GM12878 (cell line): ENCODE measurements at regions of chr1 and their contacts with region 1.

Region 1: GRCh38 chr1:174953285-174954072 is 46.3 kb upstream of the CACYBP start:
- DNase-seq: no peak
- ATAC-seq: peak; percentile 80
- H3K4me3 ChIP-seq: peak overlapping the region; percentile 59; the same call in 1 of the 2 replicates
- H3K27ac ChIP-seq: peak overlapping the region; percentile 48
- H3K4me1 ChIP-seq: peaks cover 25% of the 10 kb centered on the region
- H3K27me3 ChIP-seq: no peaks in the 10 kb centered on the region
- CTCF ChIP-seq: no peak
- EP300 ChIP-seq: peak; percentile 53 to 78; a peak in 2 of 4 replicates
- POLR2A ChIP-seq: no peak
- RAD21 ChIP-seq: no peak

Region 2: DNA sequence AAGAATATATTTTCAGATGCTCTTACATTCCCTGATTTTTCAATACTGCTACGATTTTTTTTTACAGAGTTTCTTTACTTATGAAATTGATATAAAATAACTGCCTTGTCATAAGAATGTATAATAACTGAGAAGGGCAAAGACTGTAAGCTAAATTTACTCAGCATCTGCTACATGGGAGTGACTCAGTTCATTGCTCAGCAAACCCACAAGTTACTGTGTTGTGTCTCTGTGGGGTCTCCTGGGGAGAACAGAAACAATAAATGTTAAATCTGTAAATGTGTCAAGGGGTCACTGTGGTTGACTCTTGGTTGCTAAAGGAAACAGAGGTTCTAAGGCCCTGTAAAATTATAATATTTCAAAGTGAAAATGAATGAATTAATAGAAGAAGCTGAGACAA is 164.1 kb before region 1 on chr1:
- CTCF ChIA-PET with region 1: no interaction called
- POLR2A ChIA-PET with region 1: no interaction called
- RAD21 ChIA-PET with region 1: no interaction called
- SMC1A ChIA-PET with region 1: no interaction called
- in situ Hi-C with region 1: no loop called
- intact Hi-C with region 1: no loop called
- DNase-seq: peak; percentile 50
- ATAC-seq: peak; percentile 86
- H3K4me3 ChIP-seq: no peak overlapping the region
- H3K27ac ChIP-seq: no peak overlapping the region
- H3K4me1 ChIP-seq: peaks cover 32% of the 10 kb centered on the region
- H3K27me3 ChIP-seq: no peaks in the 10 kb centered on the region
- CTCF ChIP-seq: no peak
- EP300 ChIP-seq: peak; percentile 37 to 76; a peak in 2 of 4 replicates
- POLR2A ChIP-seq: no peak
- RAD21 ChIP-seq: no peak

Region 3: DNA sequence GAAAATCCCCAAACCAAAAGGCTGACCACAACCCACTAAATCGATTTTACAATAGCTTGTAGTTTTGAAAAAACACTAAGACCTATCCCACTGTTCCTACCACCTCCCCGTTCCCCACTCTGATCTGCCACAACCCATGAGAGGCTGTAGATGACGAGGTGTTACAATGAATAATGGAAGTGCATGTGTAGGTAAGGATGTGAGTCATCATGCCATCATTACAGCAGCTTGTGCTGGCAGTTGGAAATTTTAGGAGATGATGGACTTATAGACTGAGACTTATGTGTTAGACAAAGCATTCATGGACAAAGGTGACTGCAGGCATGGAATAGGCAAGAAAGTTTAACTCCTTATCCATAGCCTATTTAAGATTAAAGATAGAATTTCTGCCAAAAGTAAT is 138.4 kb before region 1 on chr1:
- CTCF ChIA-PET with region 1: interaction called, 4 read pairs
- POLR2A ChIA-PET with region 1: interaction called, 5 read pairs
- RAD21 ChIA-PET with region 1: interaction called, 6 read pairs
- SMC1A ChIA-PET with region 1: interaction called, 11 read pairs
- in situ Hi-C with region 1: no loop called
- intact Hi-C with region 1: no loop called
- DNase-seq: peak; percentile 21
- ATAC-seq: peak; percentile 81
- H3K4me3 ChIP-seq: 0 out of 2 replicates have a peak overlapping the region, but pooled peaks have one; percentile 53
- H3K27ac ChIP-seq: peak overlapping the region; percentile 68
- H3K4me1 ChIP-seq: peaks cover 45% of the 10 kb centered on the region
- H3K27me3 ChIP-seq: no peaks in the 10 kb centered on the region
- CTCF ChIP-seq: no peak
- EP300 ChIP-seq: no peak
- POLR2A ChIP-seq: no peak
- RAD21 ChIP-seq: no peak

Region 4: GRCh38 chr1:174883409-174883808 is 70.1 kb before region 1 on chr1:
- CTCF ChIA-PET with region 1: no interaction called
- POLR2A ChIA-PET with region 1: interaction called, 5 read pairs
- RAD21 ChIA-PET with region 1: interaction called, 6 read pairs
- SMC1A ChIA-PET with region 1: interaction called, 10 read pairs
- in situ Hi-C with region 1: no loop called
- intact Hi-C with region 1: no loop called
- DNase-seq: no peak
- ATAC-seq: peak; percentile 43; the same call in 2 of the 3 replicates
- H3K4me3 ChIP-seq: no peak overlapping the region
- H3K27ac ChIP-seq: no peak overlapping the region
- H3K4me1 ChIP-seq: no peaks in the 10 kb centered on the region
- H3K27me3 ChIP-seq: no peaks in the 10 kb centered on the region
- CTCF ChIP-seq: peak in 2 of 3 experiments; percentile 10 to 46; a peak in 2 of 6 replicates
- EP300 ChIP-seq: no peak
- POLR2A ChIP-seq: no peak
- RAD21 ChIP-seq: peak; percentile 44; the same call in 1 of the 2 replicates

Region 5: GRCh38 chr1:174902531-174903099 is 50.9 kb before region 1 on chr1:
- CTCF ChIA-PET with region 1: no interaction called
- POLR2A ChIA-PET with region 1: no interaction called
- RAD21 ChIA-PET with region 1: no interaction called
- SMC1A ChIA-PET with region 1: no interaction called
- in situ Hi-C with region 1: no loop called
- intact Hi-C with region 1: no loop called
- DNase-seq: no peak
- ATAC-seq: no peak
- H3K4me3 ChIP-seq: no peak overlapping the region
- H3K27ac ChIP-seq: no peak overlapping the region
- H3K4me1 ChIP-seq: no peaks in the 10 kb centered on the region
- H3K27me3 ChIP-seq: no peaks in the 10 kb centered on the region
- CTCF ChIP-seq: no peak
- EP300 ChIP-seq: no peak
- POLR2A ChIP-seq: no peak
- RAD21 ChIP-seq: no peak

Region 6: DNA sequence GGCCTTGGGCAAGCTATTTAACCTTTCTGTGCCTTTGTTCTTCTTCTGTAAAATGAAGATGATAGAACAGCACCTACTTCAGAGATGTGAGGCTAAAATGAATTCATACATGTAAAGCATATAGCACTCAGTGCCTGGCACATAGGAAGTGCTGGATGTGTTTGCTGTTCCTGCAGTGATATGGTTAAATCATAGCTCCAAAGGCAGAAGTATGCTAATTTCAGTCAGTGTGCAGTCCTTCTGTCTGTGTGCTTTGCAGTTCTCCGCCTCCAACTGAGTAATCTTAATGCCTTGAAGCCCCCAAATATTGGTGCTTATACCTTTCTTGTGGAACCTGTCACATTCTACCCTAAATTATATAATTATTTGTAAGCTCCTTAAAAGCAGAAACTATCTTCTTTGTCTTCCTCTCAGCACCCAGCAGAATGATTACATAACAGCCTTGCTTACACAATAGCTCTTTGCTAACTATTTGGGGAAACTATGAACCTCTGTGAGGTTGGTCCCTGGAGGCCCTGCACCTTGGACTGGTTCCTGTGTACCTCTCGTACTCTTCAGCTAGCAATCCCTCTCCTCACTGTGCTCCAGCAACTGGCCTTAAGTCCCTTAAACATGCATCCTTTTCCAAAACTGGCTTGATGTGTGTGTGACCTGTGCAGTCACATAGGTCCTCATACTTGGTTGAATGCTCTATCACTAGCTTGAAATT is 10.8 kb before region 1 on chr1:
- CTCF ChIA-PET with region 1: interaction called, 6 read pairs
- POLR2A ChIA-PET with region 1: interaction called, 10 read pairs
- RAD21 ChIA-PET with region 1: interaction called, 11 read pairs
- SMC1A ChIA-PET with region 1: interaction called, 13 read pairs
- in situ Hi-C with region 1: no loop called
- intact Hi-C with region 1: no loop called
- DNase-seq: no peak
- ATAC-seq: no peak
- H3K4me3 ChIP-seq: no peak overlapping the region
- H3K27ac ChIP-seq: no peak overlapping the region
- H3K4me1 ChIP-seq: no peaks in the 10 kb centered on the region
- H3K27me3 ChIP-seq: no peaks in the 10 kb centered on the region
- CTCF ChIP-seq: no peak
- EP300 ChIP-seq: 0 out of 4 replicates have a peak, but pooled peaks of 1 of the 2 experiments have one; percentile 17
- POLR2A ChIP-seq: no peak
- RAD21 ChIP-seq: no peak

Region 7: DNA sequence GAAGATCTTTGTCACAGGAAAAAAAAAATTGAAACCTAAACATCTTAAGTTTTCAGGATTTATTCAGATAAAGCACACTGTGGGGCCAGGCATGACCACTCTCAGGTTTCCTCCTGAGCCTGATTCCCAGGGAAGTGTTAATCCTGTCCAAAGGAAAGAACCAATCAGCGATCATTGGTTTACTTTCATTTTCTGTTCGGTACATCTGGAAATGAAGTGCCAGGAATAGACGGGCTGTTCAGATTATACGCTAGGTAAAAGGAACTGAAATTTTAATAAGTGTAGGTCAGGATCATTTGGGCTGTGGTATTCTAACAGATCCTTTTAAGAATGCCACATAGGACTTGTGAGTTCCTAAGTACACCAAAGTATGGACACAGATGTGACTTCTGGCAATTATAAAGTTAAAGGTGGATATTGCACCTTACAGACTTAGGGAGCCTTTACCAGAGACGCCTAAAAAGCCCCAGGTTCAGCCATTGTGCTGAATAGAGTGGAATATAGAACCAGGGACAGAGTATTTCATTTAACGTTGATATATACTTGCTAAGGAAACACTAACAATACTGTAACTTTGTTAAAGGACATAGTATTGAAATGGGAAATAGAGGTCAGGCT is 37.0 kb after region 1 on chr1:
- CTCF ChIA-PET with region 1: interaction called, 3 read pairs
- POLR2A ChIA-PET with region 1: interaction called, 3 read pairs
- RAD21 ChIA-PET with region 1: interaction called, 9 read pairs
- SMC1A ChIA-PET with region 1: interaction called, 12 read pairs
- in situ Hi-C with region 1: no loop called
- intact Hi-C with region 1: no loop called
- DNase-seq: no peak
- ATAC-seq: peak; percentile 75
- H3K4me3 ChIP-seq: peak overlapping the region; percentile 50
- H3K27ac ChIP-seq: peak overlapping the region; percentile 73
- H3K4me1 ChIP-seq: peaks cover 17% of the 10 kb centered on the region
- H3K27me3 ChIP-seq: no peaks in the 10 kb centered on the region
- CTCF ChIP-seq: no peak
- EP300 ChIP-seq: no peak
- POLR2A ChIP-seq: no peak
- RAD21 ChIP-seq: no peak

Region 8: DNA sequence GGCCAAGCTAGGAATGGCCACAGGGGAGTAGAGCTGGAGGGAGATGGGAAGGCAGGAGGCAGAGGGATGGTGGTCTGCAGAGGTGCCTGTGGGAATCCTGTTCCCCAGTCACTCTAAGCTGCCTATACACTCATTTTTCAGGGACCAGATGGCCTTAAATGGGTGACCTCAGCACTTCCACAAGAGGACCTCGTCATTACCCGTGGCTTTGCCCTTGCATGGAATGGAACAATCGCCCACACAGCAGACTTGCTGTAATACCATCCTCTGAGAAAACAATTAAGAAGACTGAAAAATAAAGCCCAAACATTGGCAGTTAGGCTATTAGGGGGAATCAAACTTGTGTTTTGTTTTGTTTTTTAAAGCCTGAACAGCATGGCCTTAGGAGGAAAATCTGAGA is 101.3 kb after region 1 on chr1:
- CTCF ChIA-PET with region 1: no interaction called
- POLR2A ChIA-PET with region 1: no interaction called
- RAD21 ChIA-PET with region 1: no interaction called
- SMC1A ChIA-PET with region 1: no interaction called
- in situ Hi-C with region 1: no loop called
- intact Hi-C with region 1: no loop called
- DNase-seq: no peak
- ATAC-seq: no peak
- H3K4me3 ChIP-seq: no peak overlapping the region
- H3K27ac ChIP-seq: no peak overlapping the region
- H3K4me1 ChIP-seq: no peaks in the 10 kb centered on the region
- H3K27me3 ChIP-seq: no peaks in the 10 kb centered on the region
- CTCF ChIP-seq: no peak
- EP300 ChIP-seq: no peak
- POLR2A ChIP-seq: no peak
- RAD21 ChIP-seq: no peak